ENCODE measurements at regions of chr1 and their contacts with region 1.

Region 1: DNA sequence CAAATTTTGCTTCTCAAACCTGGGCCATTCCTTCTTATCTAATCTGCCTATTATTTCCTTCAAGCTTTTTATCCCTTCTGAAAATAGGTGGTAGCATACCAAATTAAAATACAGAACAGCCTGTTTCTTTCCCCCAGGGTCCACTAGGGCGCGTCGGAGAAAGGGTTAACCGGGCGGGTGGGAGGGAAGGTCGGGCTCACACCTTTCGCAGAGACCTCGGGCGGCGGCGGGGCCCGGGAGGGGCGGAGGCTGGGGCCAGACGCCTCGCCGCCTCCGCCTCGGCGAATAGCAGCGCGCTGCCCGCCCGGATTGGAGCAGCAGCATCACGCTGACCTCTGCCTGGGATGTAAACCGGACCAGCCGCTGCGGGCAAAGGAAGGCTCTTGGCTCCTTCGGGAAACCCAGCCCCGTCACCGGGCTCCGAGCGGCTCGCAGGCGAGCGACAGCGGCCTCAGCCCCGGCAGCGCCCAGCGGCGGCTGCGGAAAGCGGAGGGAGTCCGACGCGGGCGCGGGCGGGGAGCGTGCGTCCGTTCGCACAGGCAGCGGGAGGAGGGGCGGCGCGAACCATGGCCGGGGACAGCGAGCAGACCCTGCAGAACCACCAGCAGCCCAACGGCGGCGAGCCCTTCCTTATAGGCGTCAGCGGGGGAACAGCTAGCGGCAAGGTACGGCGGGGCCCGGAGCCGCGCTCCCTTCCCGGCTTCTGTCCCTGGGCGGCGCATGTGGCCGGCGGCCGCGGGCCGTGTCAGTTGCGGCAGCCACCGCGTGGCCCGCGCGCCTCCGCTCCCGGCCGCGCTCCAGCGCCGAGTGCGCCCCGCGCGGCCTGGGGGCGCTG is at the start of gene UCK2:
- DNase-seq: no peak
- ATAC-seq: peak; percentile 87
- H3K4me3 ChIP-seq: peak within 1 kb of the TSS; percentile 86
- H3K27ac ChIP-seq: peak within 1 kb of the TSS; percentile 86
- H3K4me1 ChIP-seq: no peaks in the 10 kb centered on the region; the same call in 1 of the 2 replicates
- H3K27me3 ChIP-seq: no peaks in the 10 kb centered on the region
- CTCF ChIP-seq: peak in 1 of 3 experiments; percentile 9; a peak in 2 of 6 replicates
- EP300 ChIP-seq: no peak
- POLR2A ChIP-seq: peak; percentile 66
- RAD21 ChIP-seq: peak; percentile 43; the same call in 1 of the 2 replicates
- polyA plus RNA-seq, gene UCK2: 67.0 to 74.3 TPM

Region 2: DNA sequence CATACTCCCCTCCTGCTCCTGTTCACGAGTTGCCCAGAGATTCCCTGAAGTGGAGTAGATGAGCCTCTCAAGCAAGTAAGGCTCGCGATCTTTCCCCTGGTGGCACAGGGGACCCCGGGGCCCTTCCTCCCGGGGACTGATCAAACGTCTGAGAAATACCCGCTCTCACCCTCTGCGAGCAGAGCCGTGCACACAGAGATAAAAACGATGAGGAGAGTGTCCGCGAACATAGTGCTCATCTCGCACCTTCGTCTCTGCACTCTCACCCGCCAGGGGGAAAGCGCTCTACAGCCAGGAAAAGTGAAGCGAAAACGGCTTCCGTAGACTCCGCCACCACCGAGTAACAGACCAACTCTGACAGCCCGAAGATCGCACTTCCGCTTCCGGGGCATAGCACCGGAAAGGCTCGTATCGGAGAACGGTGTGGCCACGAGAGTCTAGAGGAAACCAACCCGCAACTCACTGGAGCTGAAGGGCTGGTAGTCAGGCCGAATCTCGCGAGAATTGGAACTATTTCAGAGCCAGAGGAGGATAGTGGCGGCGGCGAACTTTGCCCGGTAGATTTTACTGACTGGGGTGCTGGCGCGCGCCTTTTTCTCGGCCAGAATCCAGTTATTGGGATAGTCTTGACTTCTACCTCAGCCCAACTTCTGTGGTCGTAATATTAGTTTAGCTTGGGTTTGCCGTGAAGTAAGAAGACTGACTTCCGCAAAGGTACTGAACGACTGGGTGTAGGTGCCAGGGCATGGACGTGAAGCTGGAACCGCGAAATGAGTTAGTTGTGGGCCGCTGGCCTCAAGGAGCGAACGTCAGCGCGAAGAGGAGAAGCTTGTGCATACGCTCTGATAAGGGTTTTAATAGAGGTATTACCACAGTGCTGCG is 58.7 kb before region 1 on chr1 and contains the start of gene TMCO1:
- CTCF ChIA-PET with region 1: interaction called, 6 read pairs
- POLR2A ChIA-PET with region 1: interaction called, 15 read pairs
- RAD21 ChIA-PET with region 1: interaction called, 16 read pairs
- SMC1A ChIA-PET with region 1: interaction called, 20 read pairs
- in situ Hi-C with region 1: loop called (anchors 5 kb)
- intact Hi-C with region 1: loop called (anchors 2 kb)
- DNase-seq: peak; percentile 93
- ATAC-seq: peak; percentile 98
- H3K4me3 ChIP-seq: peak within 1 kb of the TSS; percentile 79
- H3K27ac ChIP-seq: peak within 1 kb of the TSS; percentile 92
- H3K4me1 ChIP-seq: peaks cover 10% of the 10 kb centered on the region; the same call in 1 of the 2 replicates
- H3K27me3 ChIP-seq: no peaks in the 10 kb centered on the region
- CTCF ChIP-seq: peak in 2 of 3 experiments; percentile 15 to 16; a peak in 2 of 6 replicates
- EP300 ChIP-seq: no peak
- POLR2A ChIP-seq: peak; percentile 90
- RAD21 ChIP-seq: peak; percentile 35; the same call in 1 of the 2 replicates
- polyA plus RNA-seq, gene TMCO1: 184 to 253 TPM

Region 3: DNA sequence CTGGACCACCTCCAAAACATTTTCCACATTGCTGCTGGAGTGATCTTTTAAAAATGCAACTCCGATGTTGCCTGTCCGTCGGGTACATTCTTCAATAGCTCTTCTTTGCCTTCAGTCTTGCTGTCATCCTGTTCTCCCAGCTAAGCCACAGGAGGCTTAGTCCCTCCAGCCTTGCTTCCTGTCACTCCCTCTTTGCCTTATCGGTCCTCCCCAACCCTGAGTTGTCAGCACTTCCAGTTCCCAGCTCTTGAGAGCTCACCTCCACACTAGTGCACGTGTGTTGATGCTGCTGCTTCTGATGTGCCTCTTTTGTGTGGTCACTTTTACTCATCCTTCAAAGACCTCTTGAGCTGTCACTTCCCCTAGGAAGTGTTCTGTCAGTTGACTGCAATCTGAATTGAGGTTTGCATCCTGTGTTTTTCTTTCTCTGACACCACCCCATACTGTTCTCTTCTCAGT is 15.2 kb after region 1 on chr1:
- CTCF ChIA-PET with region 1: interaction called, 22 read pairs
- POLR2A ChIA-PET with region 1: interaction called, 44 read pairs
- RAD21 ChIA-PET with region 1: interaction called, 73 read pairs
- SMC1A ChIA-PET with region 1: interaction called, 145 read pairs
- in situ Hi-C with region 1: no loop called
- intact Hi-C with region 1: no loop called
- DNase-seq: no peak
- ATAC-seq: peak; percentile 57
- H3K4me3 ChIP-seq: no peak overlapping the region
- H3K27ac ChIP-seq: peak overlapping the region; percentile 70
- H3K4me1 ChIP-seq: peaks cover 32% of the 10 kb centered on the region
- H3K27me3 ChIP-seq: no peaks in the 10 kb centered on the region
- CTCF ChIP-seq: no peak
- EP300 ChIP-seq: no peak
- POLR2A ChIP-seq: no peak
- RAD21 ChIP-seq: no peak

Region 4: DNA sequence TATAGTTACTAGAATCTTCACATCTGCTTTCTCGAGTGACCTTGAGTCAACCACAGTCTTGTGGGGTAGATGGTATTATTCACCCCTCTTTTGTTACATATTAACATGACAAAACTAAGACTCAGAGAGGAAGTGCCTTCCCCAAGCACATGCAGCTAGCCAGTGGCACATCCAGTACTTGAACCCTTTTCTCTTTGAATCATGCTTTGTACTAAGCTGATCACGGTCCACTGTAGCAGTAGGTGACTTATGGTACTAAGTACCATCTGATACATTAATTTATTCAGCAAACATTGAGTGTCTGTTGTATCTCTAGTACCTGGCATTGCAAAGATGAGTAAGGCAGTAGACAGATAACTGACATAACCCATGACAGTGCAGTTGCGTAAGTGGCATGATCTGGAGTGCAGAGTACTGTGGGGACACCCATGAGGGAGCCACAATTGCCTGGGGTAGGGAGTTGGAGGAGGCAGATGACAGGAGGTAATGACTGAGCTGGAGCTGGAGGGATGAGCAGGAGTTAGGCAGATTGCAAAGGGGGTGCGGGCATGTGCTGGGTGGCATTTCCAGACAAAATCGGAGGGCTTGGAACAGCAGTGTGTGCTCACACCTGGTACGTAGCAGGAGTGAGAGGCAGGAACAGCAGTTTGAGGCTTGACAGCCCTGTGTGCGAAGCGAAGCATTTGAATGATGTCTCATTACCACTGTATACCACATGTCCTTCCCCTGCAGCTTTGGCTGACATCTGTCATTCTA is 29.7 kb after region 1 on chr1:
- CTCF ChIA-PET with region 1: interaction called, 32 read pairs
- POLR2A ChIA-PET with region 1: interaction called, 20 read pairs
- RAD21 ChIA-PET with region 1: interaction called, 25 read pairs
- SMC1A ChIA-PET with region 1: interaction called, 145 read pairs
- in situ Hi-C with region 1: no loop called
- intact Hi-C with region 1: loop called (anchors 2 kb)
- DNase-seq: no peak
- ATAC-seq: peak; percentile 90
- H3K4me3 ChIP-seq: no peak overlapping the region
- H3K27ac ChIP-seq: peak overlapping the region; percentile 38; the same call in 1 of the 2 replicates
- H3K4me1 ChIP-seq: peaks cover 32% of the 10 kb centered on the region
- H3K27me3 ChIP-seq: no peaks in the 10 kb centered on the region
- CTCF ChIP-seq: no peak
- EP300 ChIP-seq: peak in 1 of 2 experiments; percentile 7; a peak in 1 of 4 replicates
- POLR2A ChIP-seq: no peak
- RAD21 ChIP-seq: no peak

Region 5: DNA sequence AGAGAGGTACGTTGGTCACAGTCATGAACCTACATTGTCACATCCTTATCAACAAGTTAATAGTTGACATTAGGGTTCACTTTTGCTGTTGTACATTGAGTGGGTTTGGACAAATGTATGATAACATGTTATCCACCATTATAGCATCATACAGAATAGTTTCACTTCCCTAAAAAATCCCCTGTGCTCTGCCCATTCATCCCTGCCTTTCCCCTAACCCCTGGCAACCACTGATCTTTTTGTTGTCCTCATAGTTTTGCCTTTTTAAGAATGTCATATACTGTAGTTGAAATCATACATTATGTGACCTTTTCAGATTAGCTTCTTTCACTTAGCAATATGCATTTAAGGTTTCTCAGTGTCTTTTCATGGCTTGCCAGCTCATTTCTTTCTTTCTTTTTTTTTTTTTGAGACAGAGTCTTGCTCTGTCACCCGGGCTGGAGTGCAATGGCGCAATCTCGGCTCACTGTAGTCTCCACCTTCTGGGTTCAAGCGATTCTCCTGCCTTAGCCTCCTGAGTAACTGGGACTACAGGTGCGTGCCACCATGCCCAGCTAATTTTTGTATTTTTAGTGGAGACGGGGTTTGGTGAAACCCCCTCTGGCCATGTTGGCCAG is 50.6 kb after region 1 on chr1:
- CTCF ChIA-PET with region 1: interaction called, 36 read pairs
- POLR2A ChIA-PET with region 1: interaction called, 16 read pairs
- RAD21 ChIA-PET with region 1: interaction called, 65 read pairs
- SMC1A ChIA-PET with region 1: interaction called, 129 read pairs
- in situ Hi-C with region 1: no loop called
- intact Hi-C with region 1: loop called (anchors 2 kb)
- DNase-seq: peak; percentile 67
- ATAC-seq: peak; percentile 78
- H3K4me3 ChIP-seq: no peak overlapping the region
- H3K27ac ChIP-seq: peak overlapping the region; percentile 69
- H3K4me1 ChIP-seq: peaks cover 53% of the 10 kb centered on the region
- H3K27me3 ChIP-seq: no peaks in the 10 kb centered on the region
- CTCF ChIP-seq: no peak
- EP300 ChIP-seq: peak; percentile 82 to 84; a peak in 3 of 4 replicates
- POLR2A ChIP-seq: no peak
- RAD21 ChIP-seq: 0 out of 2 replicates have a peak, but pooled peaks have one; percentile 11

Region 6: GRCh38 chr1:165914136-165914798 is 86.8 kb after region 1 on chr1:
- CTCF ChIA-PET with region 1: interaction called, 25 read pairs
- POLR2A ChIA-PET with region 1: no interaction called
- RAD21 ChIA-PET with region 1: interaction called, 7 read pairs
- SMC1A ChIA-PET with region 1: interaction called, 17 read pairs
- in situ Hi-C with region 1: no loop called
- intact Hi-C with region 1: loop called (anchors 2 kb)
- DNase-seq: peak; percentile 54
- ATAC-seq: peak; percentile 95
- H3K4me3 ChIP-seq: no peak overlapping the region
- H3K27ac ChIP-seq: no peak overlapping the region
- H3K4me1 ChIP-seq: no peaks in the 10 kb centered on the region
- H3K27me3 ChIP-seq: no peaks in the 10 kb centered on the region
- CTCF ChIP-seq: peak; percentile 78 to 97 (median 87); a peak in 5 of 6 replicates
- EP300 ChIP-seq: no peak
- POLR2A ChIP-seq: no peak
- RAD21 ChIP-seq: peak; percentile 99